Endothelial cell of umbilical vein (primary cell): ENCODE measurements at regions of chr22 and their contacts with region 1.

Region 1: GRCh38 chr22:33854724-33855123 is 65.6 kb downstream of the LARGE1 start:
- DNase-seq: no peak
- H3K4me3 ChIP-seq: no peak overlapping the region
- H3K27ac ChIP-seq: no peak overlapping the region
- H3K4me1 ChIP-seq: no peaks in the 10 kb centered on the region
- H3K27me3 ChIP-seq: no peaks in the 10 kb centered on the region
- CTCF ChIP-seq: no peak
- POLR2A ChIP-seq: no peak

Region 2: DNA sequence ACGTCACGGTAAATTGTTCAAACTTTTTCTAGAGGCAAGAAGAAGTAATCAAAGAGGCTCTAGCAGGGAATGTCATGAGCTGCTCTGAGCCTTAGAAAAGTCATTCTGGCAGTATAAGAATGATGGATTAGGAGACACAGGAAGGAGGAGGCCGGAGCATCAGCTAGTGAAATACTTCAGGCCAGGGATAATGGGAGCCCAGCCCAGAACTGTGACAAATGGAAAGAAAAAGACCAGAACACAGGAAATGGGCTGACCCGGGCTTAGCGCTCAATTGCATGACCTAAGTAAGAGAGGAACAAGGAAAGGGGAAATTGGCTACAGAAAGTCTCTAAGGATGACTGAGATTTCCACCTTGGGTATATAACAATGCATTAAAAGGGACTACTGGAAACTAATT is 43.0 kb before region 1 on chr22:
- CTCF ChIA-PET with region 1: no interaction called
- POLR2A ChIA-PET with region 1: no interaction called
- dilution Hi-C with region 1: no loop called
- intact Hi-C with region 1: no loop called
- DNase-seq: no peak
- H3K4me3 ChIP-seq: no peak overlapping the region
- H3K27ac ChIP-seq: no peak overlapping the region
- H3K4me1 ChIP-seq: no peaks in the 10 kb centered on the region
- H3K27me3 ChIP-seq: no peaks in the 10 kb centered on the region
- CTCF ChIP-seq: no peak
- POLR2A ChIP-seq: no peak

Region 3: GRCh38 chr22:33866511-33866910 is 11.8 kb after region 1 on chr22:
- CTCF ChIA-PET with region 1: no interaction called
- POLR2A ChIA-PET with region 1: interaction called, 10 read pairs
- dilution Hi-C with region 1: no loop called
- intact Hi-C with region 1: no loop called
- DNase-seq: no peak
- H3K4me3 ChIP-seq: no peak overlapping the region
- H3K27ac ChIP-seq: no peak overlapping the region
- H3K4me1 ChIP-seq: no peaks in the 10 kb centered on the region
- H3K27me3 ChIP-seq: no peaks in the 10 kb centered on the region
- CTCF ChIP-seq: no peak
- POLR2A ChIP-seq: no peak